Mammary epithelial cell (primary cell): ENCODE measurements at regions of chr6 and their contacts with region 1.

Region 1: DNA sequence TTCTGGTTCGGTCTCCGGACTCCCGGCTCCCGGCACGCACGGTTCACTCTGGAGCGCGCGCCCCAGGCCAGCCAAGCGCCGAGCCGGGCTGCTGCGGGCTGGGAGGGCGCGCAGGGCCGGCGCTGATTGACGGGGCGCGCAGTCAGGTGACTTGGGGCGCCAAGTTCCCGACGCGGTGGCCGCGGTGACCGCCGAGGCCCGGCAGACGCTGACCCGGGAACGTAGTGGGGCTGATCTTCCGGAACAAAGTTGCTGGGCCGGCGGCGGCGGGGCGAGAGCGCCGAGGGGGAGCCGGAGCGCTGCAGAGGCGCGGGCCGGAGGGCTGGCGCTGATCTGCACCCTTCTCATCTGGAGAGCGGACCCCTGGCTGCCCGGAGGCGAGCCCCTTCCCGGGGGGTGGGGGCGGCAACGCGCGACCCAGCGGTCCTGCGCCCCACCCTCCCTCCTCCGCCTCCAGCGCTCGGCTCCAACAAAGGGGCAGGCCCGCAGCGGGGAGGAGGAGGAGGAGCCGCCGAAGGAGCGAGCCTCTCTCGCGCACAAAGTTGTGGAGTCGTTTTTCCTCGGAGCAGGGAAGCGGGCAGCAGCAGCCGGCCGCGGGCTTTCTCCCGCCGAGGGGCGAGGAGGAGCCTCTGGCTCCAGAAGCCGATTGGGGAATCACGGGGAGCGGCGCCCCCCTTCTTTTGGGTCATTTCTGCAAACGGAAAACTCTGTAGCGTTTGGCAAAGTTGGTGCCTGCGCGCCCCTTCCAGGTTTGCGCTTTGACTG is at the start of gene UTRN:
- DNase-seq: peak; percentile 83
- H3K4me3 ChIP-seq: peak within 1 kb of the TSS; percentile 79 to 95 (median 84)
- H3K27ac ChIP-seq: peak within 1 kb of the TSS; percentile 41
- H3K4me1 ChIP-seq: peaks cover 11% of the 10 kb centered on the region
- H3K27me3 ChIP-seq: no peaks in the 10 kb centered on the region
- CTCF ChIP-seq: no peak
- total RNA-seq, gene UTRN: 36.8 to 44.9 TPM

Region 2: GRCh38 chr6:144104898-144105487 is 180.0 kb before region 1 on chr6:
- CTCF ChIA-PET with region 1: no interaction called
- dilution Hi-C with region 1: no loop called
- in situ Hi-C with region 1: no loop called
- intact Hi-C with region 1: loop called (anchors 2 kb)
- DNase-seq: peak; percentile 60
- H3K4me3 ChIP-seq: no peak overlapping the region
- H3K27ac ChIP-seq: no peak overlapping the region
- H3K4me1 ChIP-seq: no peaks in the 10 kb centered on the region
- H3K27me3 ChIP-seq: no peaks in the 10 kb centered on the region
- CTCF ChIP-seq: peak; percentile 57 to 72

Region 3: DNA sequence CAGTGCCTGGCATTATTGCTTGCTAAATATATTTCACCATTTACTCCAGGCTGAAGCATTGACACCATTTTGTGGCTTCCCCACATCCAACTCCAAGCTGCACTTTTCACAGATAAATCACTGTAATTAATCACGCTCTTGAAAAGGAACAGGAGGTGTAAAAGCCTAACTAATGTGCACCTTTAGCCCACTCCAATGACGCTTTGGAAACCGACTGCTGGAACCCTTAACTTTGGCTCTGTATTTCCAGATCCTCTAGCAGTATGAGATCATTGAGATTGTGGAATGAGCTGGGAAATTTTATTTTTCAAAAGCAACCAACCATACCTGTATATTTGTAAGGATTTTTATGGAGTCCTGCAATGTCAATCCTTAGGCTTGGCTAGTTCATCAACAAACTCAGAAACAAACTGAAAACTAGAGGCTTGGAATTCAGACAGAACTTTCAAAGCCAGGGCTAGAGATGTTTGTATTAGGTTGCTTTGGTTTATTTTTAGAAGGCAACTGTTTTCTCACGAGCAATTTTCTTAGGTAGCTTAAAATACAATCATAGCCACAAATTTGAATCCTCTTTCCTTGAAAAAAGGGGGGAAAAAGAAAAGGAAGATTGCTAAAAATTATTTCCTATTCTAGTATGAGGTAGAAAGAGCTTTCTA is 52.7 kb before region 1 on chr6:
- CTCF ChIA-PET with region 1: no interaction called
- dilution Hi-C with region 1: loop called (anchors 5 kb)
- in situ Hi-C with region 1: no loop called
- intact Hi-C with region 1: no loop called
- DNase-seq: no peak
- H3K4me3 ChIP-seq: no peak overlapping the region
- H3K27ac ChIP-seq: no peak overlapping the region
- H3K4me1 ChIP-seq: no peaks in the 10 kb centered on the region
- H3K27me3 ChIP-seq: no peaks in the 10 kb centered on the region
- CTCF ChIP-seq: no peak

Region 4: DNA sequence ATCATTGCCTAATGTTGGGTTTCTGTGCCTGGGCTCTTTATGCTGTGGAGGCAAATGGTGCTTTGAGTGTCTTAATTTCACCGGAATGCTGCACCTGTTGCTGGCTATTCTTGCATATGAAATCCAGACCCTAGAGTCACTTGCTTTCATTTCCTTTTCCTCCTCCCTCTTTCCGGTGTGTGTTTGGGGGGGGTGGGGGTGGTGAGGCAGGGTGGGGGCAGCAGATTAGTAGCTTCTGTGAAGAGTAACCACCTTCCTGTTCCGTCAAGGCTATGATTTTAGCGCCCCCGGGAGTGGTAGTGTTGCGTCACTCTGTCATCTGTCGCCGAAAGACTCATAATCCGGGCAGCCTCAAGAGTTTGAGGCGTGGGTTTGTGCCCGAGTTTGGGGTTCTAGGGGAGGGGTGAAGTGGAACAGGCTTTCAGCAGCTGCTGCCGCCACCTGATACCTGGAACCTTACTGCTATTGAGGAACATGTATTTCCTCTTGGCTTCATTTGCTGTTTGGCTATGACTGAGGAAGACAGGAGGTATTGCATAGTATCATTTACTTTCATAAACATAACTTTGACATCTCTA is 49.3 kb after region 1 on chr6:
- CTCF ChIA-PET with region 1: no interaction called
- dilution Hi-C with region 1: loop called (anchors 5 kb)
- in situ Hi-C with region 1: no loop called
- intact Hi-C with region 1: loop called (anchors 5 kb)
- DNase-seq: no peak
- H3K4me3 ChIP-seq: no peak overlapping the region
- H3K27ac ChIP-seq: no peak overlapping the region
- H3K4me1 ChIP-seq: peaks cover 47% of the 10 kb centered on the region
- H3K27me3 ChIP-seq: no peaks in the 10 kb centered on the region
- CTCF ChIP-seq: no peak

Region 5: GRCh38 chr6:144415014-144415413 is 130.0 kb after region 1 on chr6:
- CTCF ChIA-PET with region 1: no interaction called
- dilution Hi-C with region 1: no loop called
- in situ Hi-C with region 1: no loop called
- intact Hi-C with region 1: loop called (anchors 2 kb)
- DNase-seq: peak; percentile 74
- H3K4me3 ChIP-seq: no peak overlapping the region
- H3K27ac ChIP-seq: peak overlapping the region; percentile 35
- H3K4me1 ChIP-seq: peaks cover 18% of the 10 kb centered on the region
- H3K27me3 ChIP-seq: no peaks in the 10 kb centered on the region
- CTCF ChIP-seq: no peak